GM10248 (cell line): ENCODE measurements at regions of chr2 and their contacts with region 1.

Region 1: DNA sequence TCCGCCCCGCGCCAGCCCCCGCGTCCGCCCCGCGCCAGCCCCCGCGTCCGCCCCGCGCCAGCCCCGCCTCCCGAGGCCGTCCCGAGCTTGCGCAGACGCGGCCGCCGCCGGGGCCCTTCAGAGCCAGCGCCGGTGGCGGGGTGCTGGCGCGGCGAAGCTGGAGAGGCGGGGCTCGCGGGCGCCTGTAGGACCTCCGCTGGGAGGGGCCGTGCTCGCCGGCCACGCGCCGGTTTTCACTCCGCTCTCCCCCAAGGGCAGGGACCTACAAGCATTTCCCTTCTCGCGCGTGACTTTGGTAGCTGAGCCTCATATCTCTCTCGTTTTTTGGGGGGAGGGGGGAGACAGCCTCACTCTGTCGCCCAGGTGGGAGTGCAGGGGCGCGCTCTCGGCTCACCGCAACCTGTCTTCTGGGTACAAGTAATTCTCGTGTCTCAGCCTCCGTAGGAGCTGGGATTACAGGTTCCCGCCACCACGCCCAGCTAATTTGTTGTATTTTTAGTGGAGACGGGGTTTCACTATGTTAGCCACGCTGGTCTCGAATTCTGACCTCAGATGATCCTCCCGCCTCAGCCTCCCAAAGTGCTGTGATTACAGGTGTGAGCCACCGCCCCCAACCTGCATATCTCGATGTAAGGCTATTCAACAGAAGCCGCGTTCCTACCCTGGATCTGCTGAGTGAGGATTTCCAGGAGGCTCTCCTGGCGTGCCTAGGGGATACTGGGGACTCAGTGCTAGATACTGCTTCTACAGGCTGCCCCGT is at the start of gene ZNF514:
- DNase-seq: peak; percentile 87
- CTCF ChIP-seq: no peak

Region 2: GRCh38 chr2:95106081-95106480 is 53.8 kb before region 1 on chr2:
- CTCF ChIA-PET with region 1: no interaction called
- POLR2A ChIA-PET with region 1: no interaction called
- DNase-seq: no peak
- CTCF ChIP-seq: no peak

Region 3: GRCh38 chr2:95121407-95122196 is 38.3 kb before region 1 on chr2 and contains the start of gene MRPS5:
- CTCF ChIA-PET with region 1: interaction called, 11 read pairs
- POLR2A ChIA-PET with region 1: interaction called, 3 read pairs
- DNase-seq: peak; percentile 95
- CTCF ChIP-seq: no peak

Region 4: DNA sequence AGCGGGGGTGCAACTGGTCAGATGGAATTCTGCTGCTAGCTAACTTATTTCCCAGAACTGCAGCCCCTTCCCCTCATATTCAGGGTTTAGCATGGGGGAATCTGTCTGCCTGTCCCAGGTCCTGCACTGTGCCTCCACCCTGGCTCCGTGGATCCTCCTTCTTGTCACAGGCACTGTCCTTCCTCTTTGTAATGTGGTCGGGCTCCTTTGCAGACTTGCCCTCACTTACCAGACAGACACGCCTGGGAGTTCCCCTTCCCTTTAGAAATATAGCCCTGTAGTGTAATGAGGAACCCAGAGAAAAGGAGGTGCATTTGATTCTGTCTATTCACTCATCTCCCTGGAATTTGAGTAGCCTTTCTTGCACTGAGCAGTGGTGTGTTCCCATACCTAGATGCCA is 540.6 kb after region 1 on chr2:
- CTCF ChIA-PET with region 1: no interaction called
- POLR2A ChIA-PET with region 1: no interaction called
- DNase-seq: no peak
- CTCF ChIP-seq: no peak